Activated CD4-positive, alpha-beta memory T cell treated with anti-CD3 and anti-CD28 coated beads for 36 hours (primary cell): ENCODE measurements at regions of chr7 and their contacts with region 1.

Region 1: GRCh38 chr7:150962553-150963399 is 15.3 kb downstream of the KCNH2 start:
- DNase-seq: peak; percentile 66
- H3K4me3 Mint-ChIP-seq: no peak overlapping the region
- H3K27ac Mint-ChIP-seq: no peak overlapping the region
- H3K4me1 Mint-ChIP-seq: peaks cover 6% of the 10 kb centered on the region
- H3K27me3 Mint-ChIP-seq: peaks cover 20% of the 10 kb centered on the region

Region 2: DNA sequence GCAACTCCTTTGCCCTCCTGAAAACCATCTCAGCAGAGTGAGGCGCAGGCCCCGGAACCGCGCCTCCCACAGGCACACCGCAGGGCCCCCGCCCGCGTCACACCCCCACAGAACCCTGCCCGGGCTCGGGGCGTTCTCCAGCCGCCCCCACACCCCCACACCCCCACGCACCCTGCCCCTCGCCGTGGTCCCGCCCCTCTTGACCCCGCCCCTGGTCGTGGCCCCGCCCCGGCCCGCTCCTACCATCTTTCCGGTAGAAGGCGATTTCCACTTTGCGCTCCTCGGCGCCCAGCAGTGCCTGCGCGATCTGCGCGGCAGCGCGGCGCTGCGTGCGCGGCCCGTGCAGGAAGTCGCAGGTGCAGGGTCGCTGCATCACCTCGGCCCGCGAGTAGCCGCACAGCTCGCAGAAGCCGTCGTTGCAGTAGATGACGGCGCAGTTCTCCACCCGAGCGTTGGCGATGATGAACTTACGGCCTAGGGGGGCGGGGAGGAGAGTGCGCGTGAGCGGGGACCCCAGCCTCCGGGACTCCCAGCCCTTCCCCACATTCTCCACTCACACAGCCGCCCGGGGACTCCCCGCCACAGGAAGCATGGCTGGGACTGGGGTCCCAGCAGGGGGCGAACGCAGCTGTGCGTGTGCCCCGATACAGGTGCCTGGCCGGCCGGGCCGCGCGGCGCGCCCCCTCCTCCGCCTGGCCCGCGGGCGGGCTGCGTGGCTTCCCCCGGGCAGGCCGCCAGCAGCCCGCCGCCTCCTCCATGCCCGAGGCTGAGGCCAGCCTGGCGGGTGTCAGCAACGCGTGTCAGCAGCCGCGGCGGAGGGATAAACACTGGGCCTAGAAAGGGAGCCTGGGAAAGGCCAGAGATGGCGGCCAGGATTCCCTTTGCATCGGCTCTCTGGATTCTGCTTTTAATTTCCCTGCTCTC is 12.0 kb after region 1 on chr7:
- CTCF ChIA-PET with region 1: interaction called, 15 read pairs
- POLR2A ChIA-PET with region 1: interaction called, 3 read pairs
- intact Hi-C with region 1: no loop called
- DNase-seq: peak; percentile 83
- H3K4me3 Mint-ChIP-seq: peak overlapping the region; percentile 83
- H3K27ac Mint-ChIP-seq: peak overlapping the region; percentile 77
- H3K4me1 Mint-ChIP-seq: peaks cover 23% of the 10 kb centered on the region
- H3K27me3 Mint-ChIP-seq: peaks cover 21% of the 10 kb centered on the region

Region 3: GRCh38 chr7:151008511-151009323 is 45.9 kb after region 1 on chr7:
- CTCF ChIA-PET with region 1: interaction called, 26 read pairs
- POLR2A ChIA-PET with region 1: interaction called, 3 read pairs
- intact Hi-C with region 1: no loop called
- DNase-seq: peak; percentile 82
- H3K4me3 Mint-ChIP-seq: peak overlapping the region; percentile 71
- H3K27ac Mint-ChIP-seq: peak overlapping the region; percentile 82
- H3K4me1 Mint-ChIP-seq: peaks cover 57% of the 10 kb centered on the region
- H3K27me3 Mint-ChIP-seq: no peaks in the 10 kb centered on the region

Region 4: DNA sequence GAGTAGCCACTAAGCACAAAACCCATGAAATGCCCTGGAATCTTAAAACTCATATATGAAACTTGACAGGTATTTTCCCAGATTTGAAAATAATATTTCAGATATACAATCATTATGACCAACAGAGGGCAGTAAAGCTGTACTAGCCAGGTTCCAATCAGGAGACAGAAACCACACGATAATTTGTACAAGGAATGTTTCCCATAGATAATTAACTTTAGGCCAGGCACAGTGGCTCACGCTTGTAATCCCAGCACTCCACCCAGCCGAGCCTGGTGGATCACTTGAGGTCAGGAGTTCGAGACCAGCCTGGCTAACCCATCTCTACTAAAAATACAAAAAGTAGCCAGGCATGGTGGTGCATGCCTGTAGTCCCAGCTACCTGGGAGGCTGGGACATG is 347.8 kb after region 1 on chr7:
- CTCF ChIA-PET with region 1: no interaction called
- POLR2A ChIA-PET with region 1: no interaction called
- intact Hi-C with region 1: no loop called
- DNase-seq: no peak
- H3K4me3 Mint-ChIP-seq: no peak overlapping the region
- H3K27ac Mint-ChIP-seq: no peak overlapping the region
- H3K4me1 Mint-ChIP-seq: peaks cover 10% of the 10 kb centered on the region
- H3K27me3 Mint-ChIP-seq: peaks cover 5% of the 10 kb centered on the region